ENCODE measurements at regions of chr4 and their contacts with region 1.

Region 1: GRCh38 chr4:52983563-52984303 is 121.6 kb downstream of the RASL11B start:
- DNase-seq: peak; percentile 64

Region 2: DNA sequence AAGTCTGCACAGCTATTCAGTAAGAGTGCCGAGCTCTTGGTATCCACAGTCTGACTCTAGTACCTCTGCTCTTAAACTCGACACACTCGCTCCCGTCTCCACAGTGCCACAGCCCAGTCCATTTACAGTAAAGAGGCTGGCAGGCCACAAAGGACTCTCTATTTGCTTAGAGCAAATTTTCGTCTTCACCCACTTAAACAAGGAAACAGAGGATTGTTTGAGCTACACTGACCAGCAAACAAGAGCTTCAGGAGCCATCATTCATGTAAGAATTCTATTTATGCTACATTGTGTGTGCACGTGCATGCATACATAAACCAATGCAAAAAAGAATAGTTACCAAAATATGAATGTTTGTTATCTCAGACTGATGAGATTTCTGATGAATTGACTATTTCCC is 614.8 kb before region 1 on chr4:
- in situ Hi-C with region 1: loop called (anchors 10 kb)
- DNase-seq: no peak

Region 3: GRCh38 chr4:52572936-52573485 is 410.7 kb before region 1 on chr4:
- in situ Hi-C with region 1: loop called (anchors 25 kb)
- DNase-seq: no peak

Region 4: GRCh38 chr4:53281438-53281837 is 297.7 kb after region 1 on chr4:
- in situ Hi-C with region 1: no loop called
- DNase-seq: no peak